Upper lobe of right lung (tissue), 1 donor: ENCODE measurements at regions of chr2 and their contacts with region 1.

Region 1: GRCh38 chr2:25127646-25128045 is 40.7 kb downstream of the POMC start:
- DNase-seq: no peak
- ATAC-seq: no peak
- H3K4me3 ChIP-seq: no peak overlapping the region
- H3K27ac ChIP-seq: no peak overlapping the region
- H3K4me1 ChIP-seq: peaks cover 7% of the 10 kb centered on the region
- H3K27me3 ChIP-seq: no peaks in the 10 kb centered on the region
- CTCF ChIP-seq: no peak

Region 2: GRCh38 chr2:24977631-24978030 is 150.0 kb before region 1 on chr2:
- intact Hi-C with region 1: loop called (anchors 5 kb)
- DNase-seq: no peak
- ATAC-seq: no peak
- H3K4me3 ChIP-seq: no peak overlapping the region
- H3K27ac ChIP-seq: no peak overlapping the region
- H3K4me1 ChIP-seq: no peaks in the 10 kb centered on the region
- H3K27me3 ChIP-seq: no peaks in the 10 kb centered on the region
- CTCF ChIP-seq: no peak